Activated naive CD4-positive, alpha-beta T cell treated with anti-CD3 and anti-CD28 coated beads, Interleukin-2, amount 10 ng/mL, durations not matched to agents 7 days and 5 days (primary cell): ENCODE measurements at regions of chr10 and their contacts with region 1.

Region 1: DNA sequence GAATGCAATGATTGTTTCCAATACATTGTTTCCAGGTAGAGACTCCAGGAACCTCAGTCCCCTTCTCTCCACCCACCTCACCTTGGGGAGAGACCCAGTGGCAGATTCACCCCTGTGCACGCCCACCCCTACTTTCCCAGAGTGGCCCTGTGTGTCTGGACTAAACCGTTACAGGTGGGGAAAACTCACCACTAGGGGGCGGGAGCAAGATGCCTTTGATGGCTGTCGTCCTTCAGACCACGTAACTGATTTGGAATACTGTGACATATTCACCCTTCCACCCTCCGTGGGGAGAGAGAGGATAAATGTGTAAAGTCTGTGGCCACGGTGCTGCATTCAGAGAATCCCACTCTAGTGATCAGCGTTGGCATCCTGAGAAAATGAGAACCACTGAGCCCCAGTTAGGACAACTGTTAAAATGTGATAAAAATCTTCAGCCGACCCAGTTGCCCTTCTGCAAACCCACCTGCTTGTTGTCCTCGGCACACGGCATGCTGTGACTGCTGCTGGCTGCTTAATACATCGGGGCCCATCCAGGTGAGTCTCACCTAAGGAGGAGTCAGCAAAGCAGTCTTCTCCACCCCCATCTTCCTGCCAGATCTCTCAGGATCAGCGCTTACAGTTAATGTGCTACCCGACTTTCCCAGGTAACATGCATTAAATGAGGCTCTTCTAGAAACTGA is 41.5 kb upstream of the NMT2 start:
- DNase-seq: peak; percentile 89
- H3K4me3 Mint-ChIP-seq: no peak overlapping the region
- H3K27ac Mint-ChIP-seq: peak overlapping the region; percentile 57
- H3K4me1 Mint-ChIP-seq: peaks cover 58% of the 10 kb centered on the region
- H3K27me3 Mint-ChIP-seq: no peaks in the 10 kb centered on the region

Region 2: GRCh38 chr10:15122477-15123030 is 87.4 kb before region 1 on chr10:
- CTCF ChIA-PET with region 1: no interaction called
- DNase-seq: no peak
- H3K4me3 Mint-ChIP-seq: peak overlapping the region; percentile 12
- H3K27ac Mint-ChIP-seq: peak overlapping the region; percentile 86
- H3K4me1 Mint-ChIP-seq: peaks cover 41% of the 10 kb centered on the region
- H3K27me3 Mint-ChIP-seq: no peaks in the 10 kb centered on the region

Region 3: GRCh38 chr10:15168781-15169554 is 41.0 kb before region 1 on chr10:
- CTCF ChIA-PET with region 1: interaction called, 10 read pairs
- DNase-seq: peak; percentile 98
- H3K4me3 Mint-ChIP-seq: peak overlapping the region; percentile 80
- H3K27ac Mint-ChIP-seq: peak overlapping the region; percentile 98
- H3K4me1 Mint-ChIP-seq: peaks cover 63% of the 10 kb centered on the region
- H3K27me3 Mint-ChIP-seq: peaks cover 4% of the 10 kb centered on the region

Region 4: DNA sequence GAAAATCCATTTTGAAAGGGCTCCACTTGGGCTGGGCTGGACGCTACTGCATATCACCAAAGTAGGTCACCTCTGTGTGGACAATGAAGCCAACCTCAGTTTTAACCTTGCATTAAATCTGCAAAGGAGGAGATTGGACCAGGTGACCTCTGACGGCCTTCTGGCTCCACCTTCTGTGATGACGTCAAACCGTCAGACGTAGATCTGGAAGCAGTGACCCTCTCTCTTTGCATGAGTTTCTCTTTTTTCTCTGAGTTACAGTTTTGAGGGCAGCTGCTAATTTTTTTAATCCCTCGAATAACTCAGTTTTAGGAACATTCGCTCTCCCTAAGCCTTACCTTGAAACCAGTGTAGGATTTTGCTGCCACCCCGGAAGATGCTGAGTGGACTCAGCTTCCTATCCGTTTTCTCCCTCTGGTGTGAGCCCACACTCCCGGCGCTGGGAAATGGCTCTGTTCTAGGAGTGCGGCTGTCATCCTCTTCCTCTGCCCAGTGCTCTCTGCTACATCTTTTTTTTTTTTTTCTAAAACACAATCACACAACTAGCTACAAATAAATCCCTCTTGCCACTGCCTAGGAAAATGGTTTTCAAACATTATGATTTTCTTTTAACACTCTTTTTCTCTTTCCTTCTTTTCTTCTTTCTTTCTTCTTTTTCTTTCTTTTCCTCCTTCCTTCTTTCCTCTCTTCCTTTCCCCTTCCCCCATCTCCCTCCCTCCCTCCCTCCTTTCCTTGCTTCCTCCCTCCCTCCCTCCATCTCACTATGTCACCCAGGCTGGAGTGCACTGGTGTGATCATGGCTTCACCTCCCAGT is 13.7 kb before region 1 on chr10:
- CTCF ChIA-PET with region 1: no interaction called
- DNase-seq: peak; percentile 25
- H3K4me3 Mint-ChIP-seq: no peak overlapping the region
- H3K27ac Mint-ChIP-seq: peak overlapping the region; percentile 98
- H3K4me1 Mint-ChIP-seq: peaks cover 53% of the 10 kb centered on the region
- H3K27me3 Mint-ChIP-seq: no peaks in the 10 kb centered on the region